Activated CD8-positive, alpha-beta T cell treated with anti-CD3 and anti-CD28 coated beads, Interleukin-2, amount 10 ng/mL, durations not matched to agents 7 days and 5 days (primary cell): ENCODE measurements at regions of chr14 and their contacts with region 1.

Region 1: DNA sequence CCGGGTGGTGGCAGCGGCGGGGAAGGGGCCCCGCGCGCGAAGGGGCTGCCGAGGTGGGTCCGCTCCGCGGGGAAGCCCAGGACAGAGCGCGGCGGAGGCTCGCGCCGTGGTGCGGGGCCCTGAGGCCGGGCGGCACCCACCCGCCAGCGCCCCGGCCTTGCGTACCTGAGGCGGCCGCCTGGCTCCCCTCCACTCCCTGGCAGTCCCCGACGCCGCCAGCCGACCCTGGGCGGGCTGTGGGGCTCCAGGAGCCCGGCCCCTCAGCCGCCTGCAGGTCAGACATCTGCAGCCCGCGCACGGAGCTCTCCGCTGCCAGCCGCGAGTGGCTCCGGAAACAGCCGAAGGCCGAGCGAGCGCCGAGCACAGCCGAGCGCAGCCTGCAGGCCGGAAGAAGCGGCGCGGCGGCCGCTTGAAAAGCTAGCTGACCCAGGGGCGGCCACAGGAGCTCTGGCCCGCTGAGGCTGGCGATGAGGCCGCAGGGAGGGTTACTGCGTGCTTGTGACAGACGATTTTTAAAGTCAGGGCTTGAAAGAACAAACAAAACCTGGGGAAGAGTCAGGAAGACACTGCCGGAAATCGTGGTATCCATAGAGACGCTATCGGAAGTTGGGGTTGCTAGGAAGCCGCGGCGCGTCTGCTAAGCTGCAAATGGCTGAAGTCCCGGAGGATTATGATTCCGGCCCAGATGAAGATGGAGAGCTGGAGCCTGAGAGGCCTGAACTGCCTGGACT is at the starts of genes SAMD15 and TMED8:
- DNase-seq: peak; percentile 87
- ATAC-seq: peak; percentile 98
- H3K4me3 Mint-ChIP-seq: peak within 1 kb of the TSS; percentile 89
- H3K27ac Mint-ChIP-seq: peak within 1 kb of the TSS; percentile 92
- H3K4me1 Mint-ChIP-seq: peaks cover 38% of the 10 kb centered on the region
- H3K27me3 Mint-ChIP-seq: peaks cover 5% of the 10 kb centered on the region
- total RNA-seq, gene SAMD15: 0.23 to 0.40 TPM
- total RNA-seq, gene TMED8: 16.7 to 17.1 TPM

Region 2: DNA sequence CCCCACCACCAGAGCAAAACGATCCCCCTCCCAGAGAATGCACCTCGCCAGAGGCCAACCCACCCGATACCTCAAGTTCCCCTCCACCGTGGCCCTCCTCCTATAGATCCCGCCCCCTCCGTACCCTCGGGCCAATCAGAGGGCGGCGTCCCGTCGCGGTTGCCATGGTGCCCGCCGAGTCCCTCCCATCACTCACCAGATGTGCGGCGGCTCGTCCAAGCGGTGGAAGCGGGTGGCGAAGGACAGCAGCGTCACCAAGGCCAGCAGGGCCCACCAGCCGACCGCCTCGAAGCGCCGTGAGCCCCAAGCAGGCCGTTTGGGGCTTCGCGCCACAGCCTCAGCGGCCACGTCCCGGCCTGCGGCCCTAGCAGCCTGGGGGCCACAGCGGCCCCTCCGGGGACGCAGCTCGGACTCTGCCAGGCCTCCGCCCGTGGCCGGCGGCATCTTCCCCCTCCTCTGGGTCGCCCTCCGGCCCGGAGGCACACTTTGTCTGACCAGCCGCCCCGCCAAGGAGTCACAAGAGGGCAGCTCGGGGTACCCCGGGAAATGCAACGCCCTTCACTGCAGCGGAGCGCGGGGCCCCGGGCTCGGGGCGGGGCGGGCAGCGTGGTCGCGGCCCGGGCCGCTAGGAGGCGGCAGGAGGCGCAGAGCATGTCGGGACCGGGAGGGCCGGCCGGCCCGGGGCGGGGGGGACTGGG is 56.5 kb before region 1 on chr14 and contains the start of gene POMT2:
- CTCF ChIA-PET with region 1: interaction called, 12 read pairs
- POLR2A ChIA-PET with region 1: interaction called, 9 read pairs
- DNase-seq: peak; percentile 94
- ATAC-seq: peak; percentile 61
- H3K4me3 Mint-ChIP-seq: peak within 1 kb of the TSS; percentile 93
- H3K27ac Mint-ChIP-seq: peak within 1 kb of the TSS; percentile 100
- H3K4me1 Mint-ChIP-seq: peaks cover 23% of the 10 kb centered on the region
- H3K27me3 Mint-ChIP-seq: no peaks in the 10 kb centered on the region
- total RNA-seq, gene POMT2: 15.0 to 15.5 TPM